CD8-positive, alpha-beta T cell (primary cell): ENCODE measurements at regions of chr17 and their contacts with region 1.

Region 1: GRCh38 chr17:30093463-30094147 is 23.0 kb upstream of the NSRP1 start:
- DNase-seq: peak in 7 of 9 experiments; percentile 14 to 71 (median 51)
- ATAC-seq: peak; percentile 52
- H3K4me3 ChIP-seq: no peak overlapping the region
- H3K4me3 Mint-ChIP-seq: no peak overlapping the region
- H3K27ac ChIP-seq: no peak overlapping the region
- H3K27ac Mint-ChIP-seq: no peak overlapping the region
- H3K4me1 ChIP-seq: no peaks in the 10 kb centered on the region
- H3K4me1 Mint-ChIP-seq: peaks cover 4% of the 10 kb centered on the region
- H3K27me3 ChIP-seq: no peaks in the 10 kb centered on the region
- H3K27me3 Mint-ChIP-seq: peaks cover 14% of the 10 kb centered on the region
- CTCF ChIP-seq: peak; percentile 93

Region 2: DNA sequence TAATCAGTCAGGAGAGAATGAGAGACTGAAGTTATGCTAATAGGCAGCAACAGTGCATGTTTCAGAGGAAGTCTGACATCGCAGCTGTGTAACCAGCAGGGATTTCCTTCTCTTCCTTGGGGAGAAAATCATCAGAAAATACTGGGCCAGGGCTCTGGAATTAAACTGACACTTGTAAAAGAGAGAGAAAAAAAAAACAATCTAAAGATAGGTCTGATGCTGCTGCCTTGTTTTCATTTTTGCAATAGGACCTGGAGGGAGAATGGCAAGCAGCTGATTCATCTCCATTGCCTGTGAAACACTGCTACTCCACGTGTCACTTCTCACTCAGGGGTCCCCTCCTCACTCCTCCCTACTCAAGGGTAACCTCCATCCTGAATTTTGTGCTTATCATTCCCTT is 453.2 kb before region 1 on chr17:
- CTCF ChIA-PET with region 1: no interaction called
- POLR2A ChIA-PET with region 1: no interaction called
- intact Hi-C with region 1: loop called in 1 of 2 experiments (anchors 5 kb)
- DNase-seq: no peak
- ATAC-seq: no peak
- H3K4me3 ChIP-seq: no peak overlapping the region
- H3K4me3 Mint-ChIP-seq: no peak overlapping the region
- H3K27ac ChIP-seq: no peak overlapping the region
- H3K27ac Mint-ChIP-seq: peak overlapping the region; percentile 61
- H3K4me1 ChIP-seq: no peaks in the 10 kb centered on the region
- H3K4me1 Mint-ChIP-seq: peaks cover 17% of the 10 kb centered on the region
- H3K27me3 ChIP-seq: no peaks in the 10 kb centered on the region
- H3K27me3 Mint-ChIP-seq: no peaks in the 10 kb centered on the region
- CTCF ChIP-seq: no peak

Region 3: DNA sequence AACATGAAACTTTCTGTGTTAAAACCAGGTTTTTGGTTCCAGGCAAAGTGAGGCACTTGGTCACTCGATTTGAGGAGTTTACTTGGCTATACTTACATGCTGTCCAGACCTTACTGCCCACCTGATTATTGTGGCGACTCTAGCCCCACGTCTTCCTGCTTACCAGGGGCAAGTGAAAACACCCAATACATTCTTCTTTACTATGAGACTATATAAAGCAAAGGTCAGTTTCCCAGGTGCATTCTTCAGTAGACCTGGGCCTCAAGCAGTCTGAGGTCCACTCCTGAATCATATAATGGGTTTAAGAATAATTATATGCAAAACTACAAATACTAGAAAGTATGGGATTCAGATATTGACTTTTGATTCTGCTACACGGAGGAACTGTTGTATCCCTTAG is 65.9 kb before region 1 on chr17:
- CTCF ChIA-PET with region 1: interaction called, 5 read pairs
- POLR2A ChIA-PET with region 1: no interaction called
- intact Hi-C with region 1: loop called in 1 of 2 experiments (anchors 5 kb)
- DNase-seq: no peak
- ATAC-seq: no peak
- H3K4me3 ChIP-seq: no peak overlapping the region
- H3K4me3 Mint-ChIP-seq: no peak overlapping the region
- H3K27ac ChIP-seq: no peak overlapping the region
- H3K27ac Mint-ChIP-seq: no peak overlapping the region
- H3K4me1 ChIP-seq: no peaks in the 10 kb centered on the region
- H3K4me1 Mint-ChIP-seq: no peaks in the 10 kb centered on the region
- H3K27me3 ChIP-seq: no peaks in the 10 kb centered on the region
- H3K27me3 Mint-ChIP-seq: no peaks in the 10 kb centered on the region
- CTCF ChIP-seq: no peak

Region 4: GRCh38 chr17:30104575-30105339 is 11.2 kb after region 1 on chr17:
- CTCF ChIA-PET with region 1: interaction called, 58 read pairs
- POLR2A ChIA-PET with region 1: interaction called, 3 read pairs
- intact Hi-C with region 1: no loop called
- DNase-seq: peak; percentile 44 to 85 (median 71)
- ATAC-seq: peak; percentile 95
- H3K4me3 ChIP-seq: peak overlapping the region; percentile 43 to 45
- H3K4me3 Mint-ChIP-seq: peak overlapping the region; percentile 85
- H3K27ac ChIP-seq: no peak overlapping the region
- H3K27ac Mint-ChIP-seq: no peak overlapping the region
- H3K4me1 ChIP-seq: no peaks in the 10 kb centered on the region
- H3K4me1 Mint-ChIP-seq: peaks cover 6% of the 10 kb centered on the region
- H3K27me3 ChIP-seq: no peaks in the 10 kb centered on the region
- H3K27me3 Mint-ChIP-seq: peaks cover 3% of the 10 kb centered on the region
- CTCF ChIP-seq: peak; percentile 93